ENCODE measurements at regions of chr17 and their contacts with region 1.

Region 1: DNA sequence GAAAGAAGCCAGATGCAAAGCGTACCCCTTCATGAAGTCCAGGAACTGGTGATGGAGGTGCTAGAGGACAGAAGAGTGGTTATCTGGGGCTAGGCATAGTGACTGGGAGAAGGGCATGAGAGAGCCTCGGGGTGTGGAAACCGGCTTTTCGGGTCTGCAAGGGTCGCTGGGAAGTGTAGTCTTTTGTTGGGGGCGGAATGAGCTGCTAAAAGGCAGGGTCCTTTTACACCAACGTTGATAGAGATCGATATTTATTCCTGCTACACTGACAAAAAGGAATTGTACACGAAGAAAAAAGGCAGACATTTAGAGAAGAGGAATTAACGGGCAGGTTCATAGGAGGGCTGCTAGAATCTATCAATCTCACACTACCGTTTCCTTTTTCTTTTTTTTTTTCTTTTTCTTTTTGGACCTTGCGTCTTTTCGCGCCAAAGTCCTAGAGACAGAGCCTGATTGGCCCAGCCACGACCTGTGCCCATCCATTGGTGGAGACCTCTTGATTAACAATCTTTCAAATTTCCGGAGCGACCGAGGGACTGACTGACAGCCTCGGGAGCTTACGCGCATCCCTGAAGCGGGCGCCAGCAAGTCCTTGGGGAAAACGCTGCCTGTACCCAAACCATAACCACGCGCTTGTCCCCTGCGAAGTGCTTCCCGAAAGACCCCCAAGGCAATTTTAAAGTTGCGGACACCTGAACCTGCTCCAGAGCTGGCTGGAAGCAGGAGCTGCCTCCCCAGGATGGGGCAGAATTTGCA is 27.7 kb upstream of the DHRS7B start:
- DNase-seq: peak; percentile 91
- CTCF ChIP-seq: no peak

Region 2: DNA sequence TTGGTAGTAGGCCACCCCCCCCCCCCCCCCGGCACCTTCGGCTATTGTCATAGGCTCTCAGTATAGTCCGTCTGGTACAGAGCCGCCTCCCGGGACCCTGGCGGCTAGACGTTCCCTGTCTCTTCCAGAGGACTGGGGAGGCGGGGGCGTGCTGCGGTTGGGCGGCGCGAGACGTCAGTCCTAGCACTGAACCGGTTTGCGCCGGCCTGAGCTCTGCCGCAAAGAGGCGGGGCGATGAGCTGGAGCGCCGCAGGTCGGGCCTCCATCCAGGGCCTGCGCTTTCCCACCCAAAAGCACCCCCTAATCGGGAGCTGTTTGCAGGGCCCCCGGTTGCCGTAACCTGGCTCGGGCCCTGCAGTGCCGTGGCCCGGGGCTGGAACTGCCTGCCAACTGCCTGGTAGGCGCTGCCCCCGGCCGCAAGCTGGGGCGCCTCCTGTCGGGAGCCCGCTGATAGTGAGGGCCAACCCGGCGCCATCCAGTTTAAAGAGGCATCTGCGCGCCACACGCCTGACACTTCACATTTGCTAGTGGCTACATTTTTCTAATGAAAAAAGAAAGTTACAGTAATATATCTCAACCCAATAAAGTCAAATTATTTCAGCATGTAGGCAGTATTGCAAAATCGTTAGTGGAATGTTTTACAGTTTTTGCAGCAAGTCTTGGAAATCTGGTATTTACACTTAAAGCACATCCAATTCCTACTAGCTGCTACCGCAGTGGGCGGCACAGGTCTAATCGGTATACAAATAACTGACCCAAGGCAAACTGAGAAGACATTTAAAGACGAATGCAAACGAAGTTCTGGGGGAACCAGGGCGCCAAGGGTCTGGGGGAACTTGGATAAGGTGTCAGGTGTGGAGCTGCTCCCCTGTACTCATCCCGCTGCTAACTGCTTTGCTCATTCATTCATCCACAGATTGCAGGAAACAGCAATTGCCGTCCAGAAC is 55.6 kb before region 1 on chr17:
- CTCF ChIA-PET with region 1: interaction called, 17 read pairs
- POLR2A ChIA-PET with region 1: interaction called, 3 read pairs
- DNase-seq: no peak
- CTCF ChIP-seq: peak; percentile 81

Region 3: GRCh38 chr17:21058098-21058893 is 40.8 kb before region 1 on chr17:
- CTCF ChIA-PET with region 1: interaction called, 16 read pairs
- POLR2A ChIA-PET with region 1: interaction called, 4 read pairs
- DNase-seq: no peak
- CTCF ChIP-seq: no peak

Region 4: GRCh38 chr17:21119247-21119918 is 20.3 kb after region 1 on chr17:
- CTCF ChIA-PET with region 1: interaction called, 56 read pairs
- POLR2A ChIA-PET with region 1: no interaction called
- DNase-seq: peak; percentile 78
- CTCF ChIP-seq: peak; percentile 94

Measured in GM10248 (cell line).